Tibial artery (tissue), 4 donors: ENCODE measurements at regions of chr11 and their contacts with region 1.

Region 1: GRCh38 chr11:36594316-36594989 is at the start of gene IFTAP:
- DNase-seq: peak; percentile 39 to 69
- H3K4me3 ChIP-seq: peak within 1 kb of the TSS; percentile 60 to 72
- H3K27ac ChIP-seq: peak within 1 kb of the TSS; percentile 56 to 72
- H3K4me1 ChIP-seq: peaks cover 0 to 12% (median 4%) of the 10 kb centered on the region in 4 donors
- H3K27me3 ChIP-seq: no peaks in the 10 kb centered on the region
- CTCF ChIP-seq: no peak

Region 2: DNA sequence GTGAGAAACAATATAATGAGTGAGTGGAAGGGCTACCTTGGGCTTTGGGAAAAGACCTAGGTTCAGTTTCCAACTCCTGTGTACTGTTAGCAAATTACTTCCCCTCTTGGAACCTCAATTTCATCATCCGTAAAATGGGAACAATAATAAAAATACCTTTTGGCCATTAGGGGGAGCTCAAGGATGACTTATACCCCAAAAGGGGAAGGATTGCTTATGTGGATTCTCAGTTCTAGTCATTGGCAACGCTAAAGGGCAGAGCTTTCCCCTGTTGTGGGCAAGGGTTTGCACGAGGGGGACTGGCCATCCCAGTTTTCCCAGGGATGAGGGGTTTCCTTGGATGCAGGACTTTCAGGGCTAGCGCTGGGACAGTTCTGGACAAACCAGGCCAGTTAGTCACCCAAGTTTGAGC is 302.1 kb before region 1 on chr11:
- intact Hi-C with region 1: loop called (anchors 10 kb)
- DNase-seq: no peak
- H3K4me3 ChIP-seq: no peak overlapping the region
- H3K27ac ChIP-seq: no peak overlapping the region
- H3K4me1 ChIP-seq: peaks cover 0 to 18% (median 13%) of the 10 kb centered on the region in 4 donors
- H3K27me3 ChIP-seq: no peaks in the 10 kb centered on the region
- CTCF ChIP-seq: peak; percentile 28 to 52